IMR-90 (cell line): ENCODE measurements at regions of chr7 and their contacts with region 1.

Region 1: GRCh38 chr7:38107486-38107893 is 70.6 kb upstream of the STARD3NL start:
- DNase-seq: peak; percentile 35
- ATAC-seq: peak; percentile 82
- H3K4me3 ChIP-seq: no peak overlapping the region
- H3K27ac ChIP-seq: no peak overlapping the region
- H3K4me1 ChIP-seq: no peaks in the 10 kb centered on the region
- H3K27me3 ChIP-seq: no peaks in the 10 kb centered on the region
- CTCF ChIP-seq: peak; percentile 74
- POLR2A ChIP-seq: no peak
- RAD21 ChIP-seq: peak; percentile 75

Region 2: GRCh38 chr7:37208528-37208927 is 899.0 kb before region 1 on chr7:
- CTCF ChIA-PET with region 1: no interaction called
- POLR2A ChIA-PET with region 1: no interaction called
- dilution Hi-C with region 1: no loop called
- in situ Hi-C with region 1: no loop called
- intact Hi-C with region 1: loop called (anchors 2 kb)
- DNase-seq: peak; percentile 62
- ATAC-seq: peak; percentile 83
- H3K4me3 ChIP-seq: no peak overlapping the region
- H3K27ac ChIP-seq: no peak overlapping the region
- H3K4me1 ChIP-seq: peaks cover 2% of the 10 kb centered on the region; the same call in 1 of the 2 replicates
- H3K27me3 ChIP-seq: no peaks in the 10 kb centered on the region
- CTCF ChIP-seq: peak; percentile 52
- POLR2A ChIP-seq: no peak
- RAD21 ChIP-seq: peak; percentile 61

Region 3: DNA sequence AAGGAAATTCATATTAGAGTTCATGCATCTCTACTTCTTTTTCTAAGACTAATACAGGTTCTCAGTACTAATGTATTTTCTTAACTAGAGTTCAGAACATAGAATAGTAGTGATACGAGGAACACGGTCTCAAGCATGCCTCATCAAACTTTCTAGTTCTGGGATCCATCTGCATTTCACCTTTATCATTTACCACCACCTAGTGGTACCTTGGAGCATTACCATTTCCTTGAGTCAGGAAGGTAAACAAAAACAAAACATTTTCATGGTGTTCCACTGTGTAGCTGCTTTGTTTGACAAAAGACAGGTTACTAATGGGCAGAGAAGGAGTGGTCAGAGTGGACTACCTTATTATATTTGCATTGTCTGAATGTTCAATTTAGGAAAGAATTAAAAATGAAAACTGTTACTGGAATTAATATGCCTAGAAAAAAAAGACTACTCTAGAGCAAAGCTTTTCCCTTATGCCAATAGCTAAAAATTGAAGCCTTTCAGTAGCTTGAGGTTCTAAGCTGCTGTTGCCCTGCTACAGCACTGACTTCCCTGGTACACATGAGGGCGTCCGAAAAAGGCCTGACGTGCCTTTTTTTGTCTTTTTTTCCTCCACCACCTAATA is 115.1 kb after region 1 on chr7:
- CTCF ChIA-PET with region 1: interaction called, 3 read pairs
- POLR2A ChIA-PET with region 1: no interaction called
- dilution Hi-C with region 1: no loop called
- in situ Hi-C with region 1: loop called (anchors 5 kb)
- intact Hi-C with region 1: loop called (anchors 1 kb)
- DNase-seq: peak; percentile 62
- ATAC-seq: peak; percentile 79
- H3K4me3 ChIP-seq: no peak overlapping the region
- H3K27ac ChIP-seq: no peak overlapping the region
- H3K4me1 ChIP-seq: peaks cover 3% of the 10 kb centered on the region; the same call in 1 of the 2 replicates
- H3K27me3 ChIP-seq: no peaks in the 10 kb centered on the region
- CTCF ChIP-seq: peak; percentile 83
- POLR2A ChIP-seq: no peak
- RAD21 ChIP-seq: peak; percentile 84

Region 4: GRCh38 chr7:38318803-38319416 is 211.4 kb after region 1 on chr7:
- CTCF ChIA-PET with region 1: interaction called, 8 read pairs
- POLR2A ChIA-PET with region 1: no interaction called
- dilution Hi-C with region 1: no loop called
- in situ Hi-C with region 1: no loop called
- intact Hi-C with region 1: loop called (anchors 1 kb)
- DNase-seq: peak; percentile 81
- ATAC-seq: peak; percentile 84
- H3K4me3 ChIP-seq: no peak overlapping the region
- H3K27ac ChIP-seq: no peak overlapping the region
- H3K4me1 ChIP-seq: peaks cover 7% of the 10 kb centered on the region; the same call in 1 of the 2 replicates
- H3K27me3 ChIP-seq: peaks cover under 1% of the 10 kb centered on the region; the same call in 1 of the 2 replicates
- CTCF ChIP-seq: peak; percentile 70
- POLR2A ChIP-seq: no peak
- RAD21 ChIP-seq: peak; percentile 77

Region 5: GRCh38 chr7:38335492-38336147 is 228.1 kb after region 1 on chr7:
- CTCF ChIA-PET with region 1: interaction called, 4 read pairs
- POLR2A ChIA-PET with region 1: no interaction called
- dilution Hi-C with region 1: no loop called
- in situ Hi-C with region 1: loop called (anchors 5 kb)
- intact Hi-C with region 1: loop called (anchors 5 kb)
- DNase-seq: peak; percentile 94
- ATAC-seq: peak; percentile 99
- H3K4me3 ChIP-seq: no peak overlapping the region
- H3K27ac ChIP-seq: no peak overlapping the region
- H3K4me1 ChIP-seq: peaks cover 2% of the 10 kb centered on the region; the same call in 1 of the 2 replicates
- H3K27me3 ChIP-seq: no peaks in the 10 kb centered on the region
- CTCF ChIP-seq: peak; percentile 99
- POLR2A ChIP-seq: no peak
- RAD21 ChIP-seq: peak; percentile 78

Region 6: DNA sequence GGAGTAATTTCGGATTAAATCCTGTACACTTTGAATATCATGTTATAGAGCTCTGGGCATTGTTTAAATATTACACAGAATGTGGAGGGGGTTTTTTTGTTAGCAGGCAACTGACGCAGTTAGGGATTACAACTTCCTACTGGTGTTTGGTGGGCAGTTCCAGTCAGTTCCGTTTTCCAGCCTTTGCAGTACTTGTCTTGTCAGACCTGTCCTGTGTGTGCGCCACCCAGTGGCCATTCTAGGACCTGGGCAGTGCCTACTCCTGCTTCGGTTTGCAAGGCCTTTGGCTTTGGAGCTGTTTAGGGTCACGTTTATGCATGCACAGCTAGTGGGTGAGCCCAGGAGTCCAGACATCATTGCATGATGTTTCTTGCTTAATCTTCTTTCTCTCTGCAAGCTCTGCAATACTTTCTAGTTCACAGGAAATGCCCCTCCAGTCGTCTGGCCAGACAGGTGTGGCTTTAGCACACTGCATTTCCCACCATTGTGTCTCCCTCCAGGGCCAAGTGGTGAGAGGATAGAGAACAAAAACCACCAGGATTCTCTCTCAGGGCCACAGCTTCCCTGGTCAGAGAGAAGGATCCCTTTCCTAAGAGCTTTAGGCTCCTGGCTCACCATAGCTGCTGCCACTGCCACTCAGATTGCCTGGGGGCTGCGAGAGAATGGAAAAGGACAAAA is 262.5 kb after region 1 on chr7:
- CTCF ChIA-PET with region 1: interaction called, 12 read pairs
- POLR2A ChIA-PET with region 1: no interaction called
- dilution Hi-C with region 1: no loop called
- in situ Hi-C with region 1: no loop called
- intact Hi-C with region 1: loop called (anchors 1 kb)
- DNase-seq: peak; percentile 85
- ATAC-seq: peak; percentile 97
- H3K4me3 ChIP-seq: no peak overlapping the region
- H3K27ac ChIP-seq: no peak overlapping the region
- H3K4me1 ChIP-seq: no peaks in the 10 kb centered on the region
- H3K27me3 ChIP-seq: no peaks in the 10 kb centered on the region
- CTCF ChIP-seq: peak; percentile 70
- POLR2A ChIP-seq: no peak
- RAD21 ChIP-seq: peak; percentile 35